Common myeloid progenitor, CD34-positive (primary cell): ENCODE measurements at regions of chr5 and their contacts with region 1.

Region 1: DNA sequence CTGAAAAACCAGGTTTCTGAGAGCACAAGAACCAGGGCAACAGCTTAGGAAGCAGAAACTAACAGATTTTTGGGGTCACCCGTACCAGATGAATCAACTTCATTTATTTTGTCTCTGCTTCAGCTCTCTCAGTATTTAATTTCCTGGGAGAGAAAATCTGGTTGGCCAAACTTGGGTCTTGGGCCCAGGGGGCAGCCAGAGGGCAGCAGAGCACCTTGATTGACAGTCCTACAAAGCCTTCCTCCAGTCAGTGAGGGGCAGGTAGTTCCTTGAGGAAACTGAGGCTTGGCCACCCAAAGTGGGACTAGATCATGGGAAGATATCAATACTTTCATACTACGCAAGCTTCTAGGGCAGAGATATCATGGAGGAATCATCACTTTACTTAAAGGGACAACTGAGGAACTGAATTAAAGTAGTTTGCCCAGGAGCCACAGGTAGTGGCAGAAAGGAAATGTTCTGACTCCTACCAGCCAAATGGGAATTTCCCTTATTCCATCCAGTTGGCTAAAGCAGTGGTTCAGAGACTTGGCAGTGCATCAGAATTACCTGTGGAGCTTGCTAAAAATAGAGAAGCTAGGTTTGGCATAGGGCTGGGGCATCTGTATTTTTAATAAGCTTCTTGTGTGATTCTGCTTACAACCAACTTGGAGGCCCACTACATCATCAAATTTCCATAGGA is 21.5 kb upstream of the ARHGAP26 start:
- DNase-seq: peak in 2 of 3 donors; percentile 20 to 23
- H3K4me3 ChIP-seq: no peak overlapping the region
- H3K27ac ChIP-seq: no peak overlapping the region
- H3K4me1 ChIP-seq: peaks cover 0 to 19% (median 8%) of the 10 kb centered on the region in 4 experiments
- H3K27me3 ChIP-seq: no peaks in the 10 kb centered on the region

Region 2: GRCh38 chr5:141543053-141543452 is 1205.7 kb before region 1 on chr5:
- CTCF ChIA-PET with region 1: no interaction called
- POLR2A ChIA-PET with region 1: no interaction called
- DNase-seq: no peak
- H3K4me3 ChIP-seq: no peak overlapping the region
- H3K27ac ChIP-seq: no peak overlapping the region
- H3K4me1 ChIP-seq: no peaks in the 10 kb centered on the region
- H3K27me3 ChIP-seq: no peaks in the 10 kb centered on the region

Region 3: DNA sequence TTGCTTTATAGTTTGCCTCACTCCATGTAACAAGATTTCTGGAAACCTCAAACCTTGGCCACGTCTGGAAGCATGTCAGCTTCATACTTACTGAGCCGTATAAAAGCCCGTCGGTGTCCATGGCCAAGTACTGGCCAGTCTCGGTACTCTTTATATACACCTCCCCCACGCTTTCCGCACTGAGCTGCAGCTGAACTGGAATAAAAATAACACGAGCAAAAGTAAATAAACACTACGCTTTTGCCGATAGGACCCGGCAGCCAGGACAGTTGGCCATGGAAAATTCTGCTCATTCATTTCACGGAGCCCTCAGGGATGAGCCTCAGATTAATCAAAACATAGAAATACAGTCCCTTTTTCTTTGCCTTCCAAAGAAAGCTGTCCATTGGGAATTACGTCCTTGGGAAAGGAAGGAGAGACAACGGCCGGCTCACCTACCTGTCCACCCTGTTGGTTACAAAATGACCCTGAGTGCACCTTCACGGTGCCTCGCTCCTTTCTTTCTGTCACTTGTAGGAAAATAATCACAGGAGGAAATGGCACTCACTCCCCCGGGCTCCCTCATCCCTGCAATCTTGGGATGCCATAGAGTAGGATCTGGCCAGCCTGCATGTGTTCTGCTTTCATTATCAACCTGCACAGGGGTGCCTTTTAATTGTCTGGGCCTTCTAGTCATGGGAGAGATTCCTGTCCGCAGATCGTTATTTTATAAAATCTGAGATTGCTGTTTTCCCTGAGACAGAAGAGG is 147.9 kb before region 1 on chr5:
- CTCF ChIA-PET with region 1: no interaction called
- POLR2A ChIA-PET with region 1: no interaction called
- DNase-seq: no peak
- H3K4me3 ChIP-seq: no peak overlapping the region
- H3K27ac ChIP-seq: no peak overlapping the region
- H3K4me1 ChIP-seq: peaks cover 0 to 3% (median 0%) of the 10 kb centered on the region in 4 experiments
- H3K27me3 ChIP-seq: peaks cover 0 to 13% (median 4%) of the 10 kb centered on the region in 5 experiments

Region 4: GRCh38 chr5:142725231-142726187 is 23.2 kb before region 1 on chr5:
- CTCF ChIA-PET with region 1: interaction called, 283 read pairs
- POLR2A ChIA-PET with region 1: no interaction called
- DNase-seq: peak in 1 of 3 donors; percentile 32
- H3K4me3 ChIP-seq: no peak overlapping the region
- H3K27ac ChIP-seq: peak overlapping the region in 1 of 2 experiments; percentile 46
- H3K4me1 ChIP-seq: peaks cover 5 to 34% (median 30%) of the 10 kb centered on the region in 4 experiments
- H3K27me3 ChIP-seq: no peaks in the 10 kb centered on the region

Region 5: GRCh38 chr5:142769741-142770631 is 21.3 kb after region 1 on chr5 and contains the start of gene ARHGAP26:
- CTCF ChIA-PET with region 1: interaction called, 21 read pairs
- POLR2A ChIA-PET with region 1: no interaction called
- DNase-seq: peak; percentile 94 to 97 (median 96)
- H3K4me3 ChIP-seq: peak within 1 kb of the TSS; percentile 75 to 94 (median 92)
- H3K27ac ChIP-seq: peak within 1 kb of the TSS in 1 of 2 experiments; percentile 47
- H3K4me1 ChIP-seq: peaks cover 8 to 27% (median 21%) of the 10 kb centered on the region in 4 experiments
- H3K27me3 ChIP-seq: peaks cover 0 to 3% (median 0%) of the 10 kb centered on the region in 5 experiments

Region 6: DNA sequence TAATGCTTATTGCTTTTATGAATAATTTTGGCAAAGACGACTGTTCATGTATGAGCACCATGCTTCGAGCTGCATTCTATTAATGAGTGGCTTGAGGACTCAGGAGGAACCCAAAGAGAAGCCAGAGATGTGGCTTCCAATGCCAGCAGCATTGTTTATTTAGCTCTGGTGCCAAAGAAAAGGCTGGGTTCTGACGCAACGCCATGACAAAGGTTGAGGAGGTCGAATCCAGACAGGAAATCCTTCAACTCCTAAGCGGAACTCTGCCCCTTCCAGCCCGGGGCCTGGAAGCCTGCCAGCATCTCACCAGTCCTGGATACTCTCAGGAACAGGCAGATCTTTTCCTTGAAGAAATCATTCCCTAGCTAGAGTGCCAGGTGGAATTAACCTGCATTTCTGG is 125.8 kb after region 1 on chr5:
- CTCF ChIA-PET with region 1: interaction called, 115 read pairs
- POLR2A ChIA-PET with region 1: no interaction called
- DNase-seq: no peak
- H3K4me3 ChIP-seq: no peak overlapping the region
- H3K27ac ChIP-seq: no peak overlapping the region
- H3K4me1 ChIP-seq: peaks cover 0 to 16% (median 11%) of the 10 kb centered on the region in 4 experiments
- H3K27me3 ChIP-seq: no peaks in the 10 kb centered on the region

Region 7: GRCh38 chr5:142888469-142889085 is 139.9 kb after region 1 on chr5:
- CTCF ChIA-PET with region 1: interaction called, 115 read pairs
- POLR2A ChIA-PET with region 1: no interaction called
- DNase-seq: peak; percentile 36 to 53 (median 39)
- H3K4me3 ChIP-seq: no peak overlapping the region
- H3K27ac ChIP-seq: no peak overlapping the region
- H3K4me1 ChIP-seq: no peaks in the 10 kb centered on the region
- H3K27me3 ChIP-seq: no peaks in the 10 kb centered on the region